ENCODE measurements at regions of chr10 and their contacts with region 1.

Region 1: GRCh38 chr10:31031558-31032257 is at the start of gene ZNF438:
- DNase-seq: peak; percentile 93 to 97
- ATAC-seq: peak; percentile 95 to 99 (median 96)
- H3K4me3 ChIP-seq: peak within 1 kb of the TSS; percentile 26 to 82 (median 62)
- H3K27ac ChIP-seq: peak within 1 kb of the TSS; percentile 97 to 100 (median 99)
- H3K4me1 ChIP-seq: peaks cover 0 to 58% (median 45%) of the 10 kb centered on the region in 9 donors
- H3K27me3 ChIP-seq: no peaks in the 10 kb centered on the region
- CTCF ChIP-seq: peak; percentile 41 to 86 (median 66)
- total RNA-seq, gene ZNF438: 9.3 to 16.1 (median 12.4) TPM

Region 2: DNA sequence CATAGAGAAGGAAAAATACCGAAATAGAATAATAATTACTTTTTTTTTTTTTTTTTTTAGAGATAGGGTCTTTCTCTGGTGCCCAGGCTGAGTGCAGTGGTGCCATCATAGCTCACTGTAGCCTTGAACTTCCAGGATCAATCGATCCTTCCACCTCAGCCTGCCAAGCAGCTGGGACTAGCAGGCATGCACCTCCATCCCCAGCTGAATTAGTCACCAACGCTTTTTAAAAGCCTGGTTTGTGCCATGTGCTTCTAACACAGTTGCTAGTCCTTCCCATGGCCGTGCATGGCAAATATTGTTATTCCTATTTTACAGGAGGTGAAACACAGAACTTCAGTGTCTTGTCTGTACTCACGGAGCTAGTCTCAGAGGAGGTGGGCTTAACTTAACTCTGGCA is 425.4 kb before region 1 on chr10:
- intact Hi-C with region 1: no loop called
- DNase-seq: no peak
- ATAC-seq: no peak
- H3K4me3 ChIP-seq: no peak overlapping the region
- H3K27ac ChIP-seq: no peak overlapping the region
- H3K4me1 ChIP-seq: peaks cover 0 to 5% (median 0%) of the 10 kb centered on the region in 9 donors
- H3K27me3 ChIP-seq: no peaks in the 10 kb centered on the region
- CTCF ChIP-seq: no peak

Region 3: GRCh38 chr10:30970760-30971460 is 60.8 kb before region 1 on chr10:
- intact Hi-C with region 1: loop called in 2 of 10 experiments (anchors 5 kb)
- DNase-seq: no peak
- ATAC-seq: peak in 6 of 8 donors; percentile 4 to 66 (median 38)
- H3K4me3 ChIP-seq: no peak overlapping the region
- H3K27ac ChIP-seq: peak overlapping the region in 9 of 10 donors; percentile 6 to 71 (median 39)
- H3K4me1 ChIP-seq: peaks cover 6 to 76% (median 38%) of the 10 kb centered on the region in 9 donors
- H3K27me3 ChIP-seq: no peaks in the 10 kb centered on the region
- CTCF ChIP-seq: no peak

Region 4: GRCh38 chr10:30999070-30999712 is 32.5 kb before region 1 on chr10:
- intact Hi-C with region 1: loop called in 1 of 10 experiments (anchors 5 kb)
- DNase-seq: peak in 1 of 2 donors; percentile 38
- ATAC-seq: peak; percentile 78 to 94 (median 86)
- H3K4me3 ChIP-seq: peak overlapping the region in 4 of 10 donors; percentile 0 to 34 (median 20)
- H3K27ac ChIP-seq: peak overlapping the region in 8 of 10 donors; percentile 1 to 87 (median 30)
- H3K4me1 ChIP-seq: peaks cover 0 to 55% (median 18%) of the 10 kb centered on the region in 9 donors
- H3K27me3 ChIP-seq: no peaks in the 10 kb centered on the region
- CTCF ChIP-seq: no peak

Region 5: DNA sequence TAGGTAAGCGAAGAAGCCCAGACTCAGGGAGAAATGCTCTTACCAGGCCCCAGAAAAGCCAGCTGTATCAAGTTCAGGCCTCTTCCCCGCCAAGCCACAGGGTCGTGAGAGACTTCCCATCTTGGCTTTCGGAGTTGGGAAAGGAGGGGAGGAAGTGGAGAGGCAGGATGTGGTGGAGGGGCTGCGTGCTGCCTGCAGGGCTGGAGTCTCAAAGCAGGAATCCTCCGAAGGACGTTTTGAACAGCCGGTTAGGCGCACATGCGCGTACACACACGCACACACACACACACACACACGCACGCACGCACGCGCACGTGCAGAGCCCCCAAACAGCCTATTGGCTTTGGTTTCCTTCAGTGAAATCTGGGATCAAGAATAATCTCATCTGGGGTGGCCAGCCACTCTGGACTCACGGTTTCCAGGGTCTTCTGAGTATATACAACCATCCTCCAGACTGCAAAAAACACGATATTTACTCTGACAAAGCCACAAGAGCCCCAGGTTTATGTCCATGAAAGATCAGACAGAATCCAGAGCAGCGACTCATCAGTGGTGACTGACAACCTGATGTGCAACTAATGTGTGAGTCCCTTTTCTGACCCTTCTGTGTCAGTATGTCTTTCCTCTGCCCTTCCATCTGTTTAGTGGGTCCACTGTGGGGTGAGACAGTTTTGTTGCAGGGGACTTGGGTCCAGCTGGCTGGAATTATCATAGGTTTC is 114.9 kb after region 1 on chr10:
- intact Hi-C with region 1: loop called in 2 of 10 experiments (anchors 5 to 10 kb)
- DNase-seq: peak; percentile 60 to 84
- ATAC-seq: peak; percentile 72 to 94 (median 87)
- H3K4me3 ChIP-seq: peak overlapping the region in 3 of 10 donors; percentile 13 to 22 (median 21)
- H3K27ac ChIP-seq: peak overlapping the region in 9 of 10 donors; percentile 46 to 86 (median 63)
- H3K4me1 ChIP-seq: peaks cover 6 to 45% (median 23%) of the 10 kb centered on the region in 9 donors
- H3K27me3 ChIP-seq: no peaks in the 10 kb centered on the region
- CTCF ChIP-seq: no peak

Region 6: DNA sequence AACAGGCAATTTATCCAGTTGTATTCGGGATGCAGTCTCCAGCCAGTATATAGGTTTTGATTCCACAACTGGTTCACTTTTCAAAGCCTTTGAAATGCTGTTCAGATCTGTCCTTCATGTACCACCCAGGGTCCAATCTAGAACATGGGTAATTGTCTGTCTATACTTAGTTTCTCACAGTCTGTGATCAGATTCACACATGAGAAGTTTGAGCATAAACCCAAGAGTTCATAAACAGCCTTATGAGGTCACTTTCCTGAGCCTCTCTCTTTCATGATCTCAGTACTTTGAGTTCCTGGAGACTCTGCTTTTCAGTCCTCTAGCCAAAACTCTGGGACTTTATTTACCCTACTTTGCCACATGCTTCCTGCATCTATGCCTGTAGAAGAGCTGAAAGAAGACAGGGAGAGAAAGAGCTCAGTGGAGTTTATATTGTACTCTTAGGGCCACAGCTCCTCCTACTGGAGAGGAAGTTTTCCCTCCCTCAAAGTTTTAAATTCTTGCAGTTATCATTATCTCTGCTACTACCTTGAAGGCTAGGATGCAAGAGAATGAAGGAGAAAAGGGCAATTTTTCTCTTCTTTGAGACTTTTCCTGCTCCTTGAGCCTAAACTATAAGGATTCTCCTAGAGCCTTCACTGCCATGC is 459.3 kb after region 1 on chr10:
- intact Hi-C with region 1: loop called in 3 of 10 experiments (anchors 5 to 10 kb)
- DNase-seq: peak in 1 of 2 donors; percentile 23
- ATAC-seq: peak in 6 of 8 donors; percentile 41 to 65 (median 51)
- H3K4me3 ChIP-seq: no peak overlapping the region
- H3K27ac ChIP-seq: no peak overlapping the region
- H3K4me1 ChIP-seq: no peaks in the 10 kb centered on the region
- H3K27me3 ChIP-seq: no peaks in the 10 kb centered on the region
- CTCF ChIP-seq: peak; percentile 27 to 68 (median 60)